ENCODE measurements at regions of chr1 and their contacts with region 1.

Region 1: DNA sequence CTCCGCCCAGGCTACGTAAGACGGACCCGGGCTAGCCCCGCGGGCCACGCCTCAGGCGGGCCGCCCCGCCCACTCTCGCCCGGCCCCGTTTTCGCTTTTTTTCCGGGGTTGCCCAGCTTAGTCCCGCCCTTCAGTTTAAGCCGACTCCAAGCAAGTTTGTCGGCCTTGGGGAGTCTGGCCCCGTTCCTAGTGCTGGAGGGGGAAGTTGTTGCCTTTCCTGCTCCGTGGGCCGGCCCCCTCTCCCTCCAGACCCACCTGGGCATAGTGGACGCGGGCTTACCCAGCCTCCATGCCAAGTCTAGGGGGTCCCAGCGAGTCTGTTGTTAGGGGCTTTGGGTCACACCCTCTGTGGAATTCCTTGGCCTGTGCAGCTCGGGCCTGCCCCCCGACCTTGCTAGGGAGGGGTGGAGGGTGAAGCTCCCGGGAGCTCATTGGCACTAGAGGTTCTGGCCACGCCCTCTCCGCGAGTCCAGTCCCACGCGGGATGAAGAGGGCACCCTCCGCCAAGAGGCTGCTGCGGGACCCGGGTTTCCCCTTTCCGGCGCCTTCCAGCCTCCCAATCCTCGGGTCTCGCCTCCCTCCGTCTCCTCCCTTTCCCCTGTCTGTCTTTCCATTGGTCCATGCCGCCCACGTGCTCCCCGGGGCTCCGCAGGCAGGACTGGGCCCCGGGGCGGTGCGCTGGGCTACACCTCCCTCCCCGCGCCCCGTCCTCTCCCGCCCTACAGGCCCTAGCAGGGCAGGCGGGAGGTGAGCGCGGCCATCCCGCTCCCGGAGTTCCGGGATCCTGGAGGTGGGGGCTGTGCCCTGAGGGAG is 3.3 kb downstream of the RUSC1 start:
- DNase-seq: peak; percentile 95
- H3K4me3 ChIP-seq: peak overlapping the region; percentile 57 to 75
- H3K27ac ChIP-seq: peak overlapping the region; percentile 90 to 95
- H3K4me1 ChIP-seq: peaks cover 23% of the 10 kb centered on the region
- H3K27me3 ChIP-seq: no peaks in the 10 kb centered on the region
- CTCF ChIP-seq: no peak
- POLR2A ChIP-seq: no peak

Region 2: DNA sequence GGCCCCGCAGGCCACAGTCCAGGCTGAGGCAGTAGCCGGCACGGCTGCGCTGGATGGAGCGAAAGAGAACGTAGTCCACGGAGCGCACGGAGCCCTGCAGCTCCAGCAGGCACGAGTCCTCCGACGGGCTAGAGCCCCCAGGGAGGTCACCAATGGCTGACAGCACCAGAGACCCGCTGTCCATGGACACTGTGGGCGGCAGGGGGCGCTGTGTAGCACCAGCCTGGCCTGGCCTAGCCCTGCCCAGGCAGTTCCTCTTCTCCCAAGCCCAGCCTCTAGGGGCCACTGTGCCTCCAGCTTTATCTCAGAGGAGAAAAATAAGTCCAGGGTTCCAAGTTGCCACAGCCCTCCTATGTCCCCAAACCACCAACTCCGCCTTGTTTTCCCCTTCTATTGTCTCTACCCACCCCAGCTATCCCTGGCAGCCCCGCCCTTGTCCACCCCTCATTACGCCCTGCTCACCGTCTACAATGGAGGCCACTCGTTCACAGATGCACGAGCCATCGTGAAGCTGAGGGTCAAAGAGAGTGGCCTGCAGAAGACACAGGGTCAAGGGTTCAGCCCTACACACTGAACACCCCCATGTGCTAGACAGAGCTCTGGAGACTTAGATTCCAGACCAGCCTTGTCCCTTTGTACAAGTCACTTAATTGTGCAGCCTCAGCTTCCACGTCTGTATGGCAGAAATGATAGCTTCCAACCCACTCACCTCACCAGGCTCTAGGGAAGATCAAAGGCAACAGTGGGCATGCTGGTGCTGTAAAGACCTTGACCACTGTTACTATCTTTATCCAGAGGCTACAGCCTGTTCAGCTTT is 73.2 kb before region 1 on chr1:
- intact Hi-C with region 1: loop called (anchors 10 kb)
- DNase-seq: peak; percentile 94
- H3K4me3 ChIP-seq: peak overlapping the region; percentile 5 to 47
- H3K27ac ChIP-seq: peak overlapping the region in 1 of 2 donors; percentile 32
- H3K4me1 ChIP-seq: peaks cover 36% of the 10 kb centered on the region
- H3K27me3 ChIP-seq: no peaks in the 10 kb centered on the region
- CTCF ChIP-seq: peak; percentile 95 to 99 (median 98)
- POLR2A ChIP-seq: no peak

Region 3: GRCh38 chr1:155300553-155301329 is 23.3 kb before region 1 on chr1:
- intact Hi-C with region 1: no loop called
- DNase-seq: no peak
- H3K4me3 ChIP-seq: no peak overlapping the region
- H3K27ac ChIP-seq: no peak overlapping the region
- H3K4me1 ChIP-seq: no peaks in the 10 kb centered on the region
- H3K27me3 ChIP-seq: no peaks in the 10 kb centered on the region
- CTCF ChIP-seq: no peak
- POLR2A ChIP-seq: no peak

Region 4: GRCh38 chr1:155410931-155411330 is 86.9 kb after region 1 on chr1:
- intact Hi-C with region 1: no loop called
- DNase-seq: no peak
- H3K4me3 ChIP-seq: no peak overlapping the region
- H3K27ac ChIP-seq: no peak overlapping the region
- H3K4me1 ChIP-seq: no peaks in the 10 kb centered on the region
- H3K27me3 ChIP-seq: no peaks in the 10 kb centered on the region
- CTCF ChIP-seq: no peak
- POLR2A ChIP-seq: no peak